ENCODE measurements at regions of chr3 and their contacts with region 1.

Region 1: DNA sequence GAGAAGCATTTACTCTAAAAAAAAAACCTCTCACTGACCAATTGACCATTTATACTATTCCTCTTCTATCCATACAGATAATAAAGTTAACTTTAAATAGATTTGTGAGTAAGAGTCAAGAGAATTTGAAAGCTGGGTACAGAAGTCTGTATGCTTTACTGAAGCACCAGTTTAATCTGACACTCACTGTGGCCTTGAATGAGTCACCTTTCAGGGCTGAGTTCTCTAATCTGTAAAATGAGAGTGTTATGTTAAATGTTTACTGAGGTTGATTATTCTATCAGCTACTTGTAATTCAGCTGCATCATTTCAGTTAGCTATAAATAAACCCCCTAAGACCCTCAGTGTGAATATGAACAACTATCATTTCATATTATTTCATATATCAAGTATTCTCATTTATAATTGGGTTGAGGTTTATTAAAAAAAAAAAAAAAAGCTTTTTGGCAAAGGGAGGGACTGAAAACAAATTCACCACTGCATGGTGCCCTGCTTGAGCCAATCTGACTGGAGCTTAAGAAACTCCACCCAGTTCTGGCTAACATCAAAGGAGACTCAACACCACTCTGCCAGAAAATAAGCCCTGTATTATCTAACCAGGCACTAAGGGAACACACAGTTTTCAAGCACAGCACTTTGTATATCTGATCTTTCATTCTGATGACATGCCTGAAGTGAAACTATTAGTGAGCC is 2.8 kb downstream of the MAP4 start:
- DNase-seq: peak in 3 of 5 donors; percentile 37 to 55 (median 38)
- ATAC-seq: peak; percentile 88 to 92 (median 89)
- H3K4me3 ChIP-seq: peak overlapping the region in 8 of 12 donors; percentile 22 to 50 (median 42)
- H3K27ac ChIP-seq: peak overlapping the region; percentile 58 to 87 (median 80)
- H3K4me1 ChIP-seq: peaks cover 0 to 97% (median 60%) of the 10 kb centered on the region in 12 donors
- H3K27me3 ChIP-seq: no peaks in the 10 kb centered on the region
- CTCF ChIP-seq: no peak
- POLR2A ChIP-seq: no peak

Region 2: DNA sequence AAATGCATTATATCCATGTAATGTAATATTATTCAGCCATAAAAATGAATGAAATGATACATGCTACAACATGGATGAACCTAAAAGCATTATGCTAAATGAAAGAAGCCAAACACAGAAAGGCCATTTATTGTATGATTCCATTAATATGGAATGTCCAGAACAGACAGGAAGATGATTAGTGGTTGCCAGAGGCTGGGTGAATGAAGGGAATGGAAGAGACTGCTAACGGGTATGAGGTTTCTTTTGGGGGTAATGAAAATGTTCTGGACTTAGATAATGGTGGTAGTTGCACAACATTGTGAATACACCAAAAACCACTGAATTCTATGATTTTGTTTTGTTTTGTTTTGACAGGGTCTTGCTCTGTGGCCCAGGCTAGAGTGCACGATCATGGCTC is 64.4 kb after region 1 on chr3:
- intact Hi-C with region 1: loop called in 1 of 10 experiments (anchors 10 kb)
- DNase-seq: no peak
- ATAC-seq: peak in 2 of 4 donors; percentile 41 to 44
- H3K4me3 ChIP-seq: no peak overlapping the region
- H3K27ac ChIP-seq: no peak overlapping the region
- H3K4me1 ChIP-seq: peaks cover 0 to 59% (median 18%) of the 10 kb centered on the region in 12 donors
- H3K27me3 ChIP-seq: no peaks in the 10 kb centered on the region
- CTCF ChIP-seq: no peak
- POLR2A ChIP-seq: no peak

Measured in heart left ventricle (tissue), 16 donors.